ENCODE measurements at regions of chr1 and their contacts with region 1.

Region 1: GRCh38 chr1:35715568-35716002 is 3.1 kb downstream of the C1orf216 start:
- DNase-seq: peak; percentile 85
- ATAC-seq: peak; percentile 60
- H3K4me3 Mint-ChIP-seq: peak overlapping the region; percentile 30
- H3K27ac Mint-ChIP-seq: no peak overlapping the region
- H3K4me1 Mint-ChIP-seq: peaks cover 30% of the 10 kb centered on the region
- H3K27me3 Mint-ChIP-seq: no peaks in the 10 kb centered on the region
- CTCF ChIP-seq: peak; percentile 96

Region 2: DNA sequence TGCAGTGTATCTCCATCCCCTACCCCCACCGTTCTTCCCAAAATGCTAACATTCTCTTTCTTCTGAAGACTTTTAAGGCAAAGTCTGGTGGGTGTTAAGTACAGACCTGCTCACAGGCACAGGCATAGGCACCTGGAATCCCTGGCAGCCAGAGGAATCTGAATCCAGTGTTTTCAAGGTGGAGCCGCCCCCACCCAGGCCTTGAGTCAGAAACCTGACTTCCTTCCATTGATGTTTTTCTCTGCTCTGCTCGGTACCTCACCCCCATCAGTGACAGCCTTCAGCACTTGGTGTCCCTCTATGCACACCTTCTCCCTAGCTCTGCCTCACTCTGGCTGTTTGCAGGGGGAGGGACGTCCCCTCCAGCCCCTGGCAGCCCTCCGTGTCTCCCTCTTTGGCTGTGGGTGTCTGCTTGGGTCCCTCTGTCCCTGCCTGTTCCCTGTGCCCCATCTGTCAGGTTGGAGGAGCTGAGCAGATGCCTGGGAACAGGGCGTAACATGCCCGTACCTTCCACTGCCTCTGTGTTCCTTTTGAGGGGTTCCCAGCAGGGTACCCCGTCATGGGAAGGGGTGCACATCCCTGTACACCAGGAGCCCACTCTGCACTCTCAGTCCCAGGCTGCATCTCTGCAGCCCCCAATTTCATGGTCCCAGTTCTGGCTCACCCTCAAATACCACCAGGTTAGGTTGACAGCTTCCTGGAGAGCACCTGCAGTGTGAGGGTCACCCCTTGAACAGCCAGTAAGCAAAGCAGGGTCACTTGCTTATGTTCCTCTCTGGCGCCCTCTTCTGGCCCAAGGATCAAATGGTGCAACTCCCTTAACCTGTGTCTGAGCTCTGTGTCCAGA is 151.3 kb before region 1 on chr1:
- CTCF ChIA-PET with region 1: interaction called, 76 read pairs
- POLR2A ChIA-PET with region 1: no interaction called
- intact Hi-C with region 1: no loop called
- DNase-seq: peak; percentile 93
- ATAC-seq: peak; percentile 83
- H3K4me3 Mint-ChIP-seq: no peak overlapping the region
- H3K27ac Mint-ChIP-seq: peak overlapping the region; percentile 50
- H3K4me1 Mint-ChIP-seq: peaks cover 24% of the 10 kb centered on the region
- H3K27me3 Mint-ChIP-seq: no peaks in the 10 kb centered on the region
- CTCF ChIP-seq: peak; percentile 83

Region 3: GRCh38 chr1:35637401-35637809 is 78.2 kb before region 1 on chr1:
- CTCF ChIA-PET with region 1: interaction called, 16 read pairs
- POLR2A ChIA-PET with region 1: interaction called, 3 read pairs
- intact Hi-C with region 1: loop called (anchors 2 kb)
- DNase-seq: no peak
- ATAC-seq: no peak
- H3K4me3 Mint-ChIP-seq: peak overlapping the region; percentile 80
- H3K27ac Mint-ChIP-seq: peak overlapping the region; percentile 93
- H3K4me1 Mint-ChIP-seq: peaks cover 33% of the 10 kb centered on the region
- H3K27me3 Mint-ChIP-seq: no peaks in the 10 kb centered on the region
- CTCF ChIP-seq: no peak

Region 4: DNA sequence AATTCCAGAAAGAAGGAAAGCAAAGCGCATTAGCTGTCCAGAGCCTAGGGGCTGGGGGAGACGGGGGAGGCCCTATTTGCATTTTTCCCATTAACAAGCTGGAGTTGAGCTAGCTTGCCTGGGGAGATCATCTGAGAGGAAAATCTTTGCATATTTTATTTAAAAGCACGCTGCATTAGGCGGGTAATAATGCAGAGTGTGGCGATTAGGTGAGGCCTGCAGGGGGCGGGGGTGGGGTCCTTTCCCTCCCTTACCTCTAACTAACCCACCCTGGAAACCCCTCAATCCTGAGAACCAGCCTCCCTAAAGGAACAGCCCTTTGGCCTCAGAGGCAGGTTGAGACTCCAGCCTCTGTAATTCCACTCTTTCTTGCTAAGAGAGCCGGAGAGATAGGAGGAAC is 13.1 kb before region 1 on chr1:
- CTCF ChIA-PET with region 1: interaction called, 54 read pairs
- POLR2A ChIA-PET with region 1: interaction called, 6 read pairs
- intact Hi-C with region 1: no loop called
- DNase-seq: no peak
- ATAC-seq: no peak
- H3K4me3 Mint-ChIP-seq: no peak overlapping the region
- H3K27ac Mint-ChIP-seq: no peak overlapping the region
- H3K4me1 Mint-ChIP-seq: peaks cover 8% of the 10 kb centered on the region
- H3K27me3 Mint-ChIP-seq: peaks cover 51% of the 10 kb centered on the region
- CTCF ChIP-seq: no peak

Region 5: DNA sequence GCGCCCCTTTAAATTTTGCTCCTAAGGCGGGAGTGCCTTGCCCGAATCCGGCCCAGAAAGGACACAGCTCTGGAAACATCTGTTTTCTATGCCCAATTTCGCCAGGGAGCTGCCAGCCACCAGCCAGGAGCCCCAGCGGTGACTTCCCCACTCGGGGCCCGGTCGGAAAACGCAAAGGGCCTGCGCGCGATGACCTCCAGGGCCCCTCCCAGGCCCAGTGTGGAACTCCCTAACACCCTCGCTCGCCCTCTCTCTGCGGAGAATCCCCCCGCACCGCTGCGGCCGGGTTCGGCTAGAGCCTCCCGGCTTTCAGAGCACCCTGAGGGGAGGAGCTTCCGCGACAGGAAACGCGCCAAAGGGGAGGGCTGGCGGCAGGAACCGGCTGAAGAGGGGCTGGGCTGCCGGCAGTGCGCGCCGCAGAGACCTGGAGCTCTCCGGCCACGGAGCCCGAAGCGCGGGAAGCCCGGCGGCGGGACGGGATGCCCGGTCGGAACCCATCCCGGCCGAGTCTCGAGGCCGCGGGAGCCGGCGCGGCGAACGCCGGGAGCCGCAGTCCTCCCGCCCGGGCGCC is 53.7 kb after region 1 on chr1:
- CTCF ChIA-PET with region 1: interaction called, 14 read pairs
- POLR2A ChIA-PET with region 1: interaction called, 6 read pairs
- intact Hi-C with region 1: no loop called
- DNase-seq: peak; percentile 91
- ATAC-seq: peak; percentile 83
- H3K4me3 Mint-ChIP-seq: peak overlapping the region; percentile 86
- H3K27ac Mint-ChIP-seq: peak overlapping the region; percentile 81
- H3K4me1 Mint-ChIP-seq: peaks cover 14% of the 10 kb centered on the region
- H3K27me3 Mint-ChIP-seq: no peaks in the 10 kb centered on the region
- CTCF ChIP-seq: peak; percentile 29

Measured in activated CD8-positive, alpha-beta T cell treated with anti-CD3 and anti-CD28 coated beads for 36 hours (primary cell).